Activated B cell treated with CpG ODN at 0.5 μM for 24 hours (primary cell): ENCODE measurements at regions of chr14 and their contacts with region 1.

Region 1: DNA sequence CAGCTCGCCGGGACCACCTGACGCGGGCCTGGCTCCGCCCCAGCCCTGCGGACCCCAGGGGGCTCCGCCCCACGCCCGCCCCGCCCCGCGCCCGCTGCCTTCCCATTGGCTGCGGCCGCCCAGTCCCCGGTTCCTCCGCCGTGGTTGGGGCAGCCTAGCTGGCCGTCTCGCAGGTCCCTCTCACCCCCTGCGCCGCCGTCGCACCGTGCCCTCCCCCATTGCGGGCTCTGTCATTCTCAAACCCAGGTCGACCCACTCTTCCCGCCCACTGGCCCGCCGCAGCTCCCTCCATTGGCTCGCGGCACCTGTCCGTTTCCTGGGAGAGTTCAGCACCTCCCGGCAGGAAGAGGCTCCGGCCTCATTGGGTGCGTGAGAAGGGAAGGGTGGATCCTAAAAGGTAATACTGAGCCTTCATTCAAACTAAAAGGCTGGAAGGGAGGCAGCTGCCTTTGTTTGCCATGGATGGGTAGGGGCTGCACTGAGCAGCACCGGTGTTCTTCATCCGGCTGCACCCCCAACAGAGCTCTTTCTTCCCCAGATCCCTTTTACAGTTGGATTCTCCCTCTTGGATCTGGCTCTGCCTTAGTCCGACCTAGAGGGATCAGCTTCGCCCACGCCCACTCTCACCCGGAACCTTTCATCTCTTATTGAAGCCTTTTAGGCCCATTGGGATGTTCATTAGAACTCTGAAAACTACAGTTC is 381 bp upstream of the MAP3K9 start:
- DNase-seq: peak; percentile 85
- ATAC-seq: peak; percentile 87
- H3K4me3 Mint-ChIP-seq: no peak overlapping the region
- H3K27ac Mint-ChIP-seq: peak overlapping the region; percentile 80
- H3K4me1 Mint-ChIP-seq: peaks cover 24% of the 10 kb centered on the region
- H3K27me3 Mint-ChIP-seq: no peaks in the 10 kb centered on the region
- CTCF ChIP-seq: no peak

Region 2: DNA sequence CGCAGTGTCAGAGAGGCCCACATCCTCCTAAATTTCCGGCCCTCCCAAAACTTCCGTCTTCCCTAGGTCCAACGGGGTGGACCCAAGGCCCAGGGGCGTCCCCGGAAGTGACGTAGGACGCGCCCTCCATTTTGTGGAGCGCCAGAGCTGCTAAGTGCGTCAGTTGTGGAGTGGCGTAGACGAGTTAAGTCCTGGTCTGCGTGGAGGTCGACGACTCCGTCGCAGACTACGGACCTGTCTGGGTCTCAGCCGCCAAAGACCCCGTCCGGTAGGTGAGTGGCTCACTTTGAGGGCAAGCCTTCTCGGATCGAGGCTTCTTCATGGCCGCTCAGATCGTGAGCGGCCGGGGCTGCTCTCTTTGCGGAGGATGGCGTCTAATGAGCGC is 1042.7 kb before region 1 on chr14 and contains the start of gene SRSF5:
- CTCF ChIA-PET with region 1: no interaction called
- POLR2A ChIA-PET with region 1: interaction called, 3 read pairs
- intact Hi-C with region 1: loop called (anchors 1 kb)
- DNase-seq: peak; percentile 92
- ATAC-seq: peak; percentile 78
- H3K4me3 Mint-ChIP-seq: peak within 1 kb of the TSS; percentile 98
- H3K27ac Mint-ChIP-seq: peak within 1 kb of the TSS; percentile 100
- H3K4me1 Mint-ChIP-seq: peaks cover 51% of the 10 kb centered on the region
- H3K27me3 Mint-ChIP-seq: no peaks in the 10 kb centered on the region
- CTCF ChIP-seq: no peak
- total RNA-seq, gene SRSF5: 394 and 422 TPM in 2 replicates

Region 3: DNA sequence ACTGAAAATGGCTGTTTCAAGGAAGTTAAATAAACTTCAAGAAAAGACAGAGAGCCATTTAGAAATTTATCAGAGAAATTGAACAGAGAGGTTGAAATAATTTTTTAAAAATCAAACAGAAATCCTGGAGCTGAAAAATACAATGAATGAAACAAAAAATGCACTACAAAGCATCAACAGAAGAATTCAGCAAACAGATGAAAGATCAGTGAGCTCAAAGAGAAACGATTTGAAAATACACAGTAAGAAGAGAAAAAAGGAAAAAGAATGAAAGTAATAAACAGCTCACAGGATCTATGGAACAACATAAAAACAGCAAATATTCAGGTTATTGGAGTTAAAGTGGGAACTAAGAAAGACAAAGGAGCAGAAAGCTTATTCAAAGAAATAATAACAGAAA is 476.4 kb before region 1 on chr14:
- CTCF ChIA-PET with region 1: no interaction called
- POLR2A ChIA-PET with region 1: interaction called, 10 read pairs
- intact Hi-C with region 1: no loop called
- DNase-seq: no peak
- ATAC-seq: no peak
- H3K4me3 Mint-ChIP-seq: no peak overlapping the region
- H3K27ac Mint-ChIP-seq: no peak overlapping the region
- H3K4me1 Mint-ChIP-seq: no peaks in the 10 kb centered on the region
- H3K27me3 Mint-ChIP-seq: no peaks in the 10 kb centered on the region
- CTCF ChIP-seq: no peak

Region 4: DNA sequence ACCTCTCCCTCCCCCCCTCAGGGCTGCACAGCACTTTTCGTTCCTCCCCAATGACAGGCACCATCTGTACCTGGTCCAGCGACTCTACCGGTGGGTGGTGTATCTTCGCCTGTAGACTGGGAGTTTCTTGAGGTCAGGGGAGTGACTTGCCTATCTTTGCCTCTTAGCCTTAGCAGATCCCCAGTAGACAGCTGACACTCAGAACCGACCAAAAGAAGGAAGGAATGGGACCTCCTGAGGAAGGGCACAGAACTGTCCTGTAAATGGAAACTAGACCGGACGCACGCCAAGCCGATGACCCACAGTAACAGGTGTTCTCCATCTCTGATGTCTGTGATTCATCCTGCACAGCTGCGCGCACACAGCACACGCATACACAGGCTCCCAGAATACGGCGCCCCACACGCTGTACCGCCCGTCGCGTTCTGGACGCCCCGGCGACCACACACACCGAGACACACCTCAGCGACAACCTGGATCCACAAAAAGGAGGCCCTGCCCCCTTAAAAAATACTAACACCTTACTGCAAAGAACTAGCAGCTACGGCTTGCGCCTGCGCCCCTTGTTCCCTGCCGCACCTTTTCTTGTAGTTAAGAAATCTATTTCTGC is 168.7 kb before region 1 on chr14:
- CTCF ChIA-PET with region 1: no interaction called
- POLR2A ChIA-PET with region 1: interaction called, 19 read pairs
- intact Hi-C with region 1: loop called (anchors 2 kb)
- DNase-seq: peak; percentile 51
- ATAC-seq: peak; percentile 64
- H3K4me3 Mint-ChIP-seq: peak overlapping the region; percentile 97
- H3K27ac Mint-ChIP-seq: peak overlapping the region; percentile 97
- H3K4me1 Mint-ChIP-seq: peaks cover 70% of the 10 kb centered on the region
- H3K27me3 Mint-ChIP-seq: no peaks in the 10 kb centered on the region
- CTCF ChIP-seq: no peak

Region 5: GRCh38 chr14:70780396-70781075 is 29.2 kb before region 1 on chr14:
- CTCF ChIA-PET with region 1: interaction called, 3 read pairs
- POLR2A ChIA-PET with region 1: interaction called, 21 read pairs
- intact Hi-C with region 1: loop called (anchors 2 kb)
- DNase-seq: peak; percentile 26
- ATAC-seq: peak; percentile 93
- H3K4me3 Mint-ChIP-seq: peak overlapping the region; percentile 68
- H3K27ac Mint-ChIP-seq: peak overlapping the region; percentile 90
- H3K4me1 Mint-ChIP-seq: peaks cover 59% of the 10 kb centered on the region
- H3K27me3 Mint-ChIP-seq: no peaks in the 10 kb centered on the region
- CTCF ChIP-seq: no peak

Region 6: DNA sequence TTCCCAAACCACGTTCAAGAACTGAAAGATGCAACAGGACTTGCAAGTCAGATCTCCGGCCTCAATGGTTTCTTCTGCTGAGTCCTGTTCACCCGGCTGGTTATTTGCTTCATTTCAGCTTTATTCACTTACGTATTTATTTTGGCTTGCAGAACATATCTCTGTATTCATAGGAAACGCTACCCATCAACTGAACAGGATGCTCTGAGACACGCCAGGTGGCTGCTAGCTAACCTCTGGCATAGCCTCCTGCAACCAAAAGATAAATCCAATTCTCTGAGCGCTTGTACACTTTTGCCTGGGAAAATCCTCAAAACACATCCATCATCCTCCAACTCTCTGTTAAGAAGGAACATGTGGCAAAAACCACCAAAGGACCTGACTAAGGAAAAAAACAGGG is 17.7 kb before region 1 on chr14:
- CTCF ChIA-PET with region 1: no interaction called
- POLR2A ChIA-PET with region 1: no interaction called
- intact Hi-C with region 1: no loop called
- DNase-seq: no peak
- ATAC-seq: no peak
- H3K4me3 Mint-ChIP-seq: no peak overlapping the region
- H3K27ac Mint-ChIP-seq: no peak overlapping the region
- H3K4me1 Mint-ChIP-seq: no peaks in the 10 kb centered on the region
- H3K27me3 Mint-ChIP-seq: no peaks in the 10 kb centered on the region
- CTCF ChIP-seq: no peak